ENCODE measurements at regions of chr20 and their contacts with region 1.

Region 1: DNA sequence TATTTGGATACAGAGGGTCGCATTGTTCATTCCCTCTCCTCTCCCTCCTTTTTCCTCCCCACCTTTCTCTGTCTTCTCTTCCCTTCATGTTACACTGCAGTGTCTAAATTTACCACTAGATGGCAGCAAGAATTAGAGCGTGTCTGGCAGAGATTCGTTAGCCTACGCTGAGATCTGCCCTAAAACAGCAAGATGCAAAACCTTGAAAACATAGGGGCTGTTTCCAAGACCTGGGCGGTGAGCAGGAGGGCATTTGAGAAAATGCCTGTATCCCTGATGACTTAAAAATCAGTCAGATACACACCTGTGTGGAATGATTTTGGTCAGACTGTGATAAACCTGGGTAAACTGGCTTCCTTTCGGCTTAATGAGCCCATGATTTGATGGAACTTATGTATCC is 101.5 kb upstream of the ISM1 start:
- DNase-seq: no peak
- H3K4me3 ChIP-seq: no peak overlapping the region
- H3K27ac ChIP-seq: no peak overlapping the region
- H3K4me1 ChIP-seq: no peaks in the 10 kb centered on the region
- H3K27me3 ChIP-seq: no peaks in the 10 kb centered on the region
- CTCF ChIP-seq: peak; percentile 76 to 88 (median 84)
- EP300 ChIP-seq: no peak
- POLR2A ChIP-seq: no peak

Region 2: GRCh38 chr20:13221673-13222318 is 102.2 kb after region 1 on chr20:
- intact Hi-C with region 1: loop called (anchors 5 kb)
- DNase-seq: peak; percentile 74
- H3K4me3 ChIP-seq: peak overlapping the region; percentile 12 to 62 (median 54)
- H3K27ac ChIP-seq: peak overlapping the region in 3 of 4 donors; percentile 1 to 52 (median 27)
- H3K4me1 ChIP-seq: peaks cover 0 to 22% (median 21%) of the 10 kb centered on the region in 4 donors
- H3K27me3 ChIP-seq: peaks cover 12 to 40% (median 29%) of the 10 kb centered on the region in 3 donors
- CTCF ChIP-seq: no peak
- EP300 ChIP-seq: no peak
- POLR2A ChIP-seq: no peak

Region 3: GRCh38 chr20:13546497-13547131 is 427.0 kb after region 1 on chr20:
- intact Hi-C with region 1: loop called (anchors 1 kb)
- DNase-seq: peak; percentile 89
- H3K4me3 ChIP-seq: no peak overlapping the region
- H3K27ac ChIP-seq: no peak overlapping the region
- H3K4me1 ChIP-seq: peaks cover 0 to 16% (median 12%) of the 10 kb centered on the region in 4 donors
- H3K27me3 ChIP-seq: no peaks in the 10 kb centered on the region
- CTCF ChIP-seq: peak; percentile 46 to 87 (median 80)
- EP300 ChIP-seq: no peak
- POLR2A ChIP-seq: no peak

Region 4: DNA sequence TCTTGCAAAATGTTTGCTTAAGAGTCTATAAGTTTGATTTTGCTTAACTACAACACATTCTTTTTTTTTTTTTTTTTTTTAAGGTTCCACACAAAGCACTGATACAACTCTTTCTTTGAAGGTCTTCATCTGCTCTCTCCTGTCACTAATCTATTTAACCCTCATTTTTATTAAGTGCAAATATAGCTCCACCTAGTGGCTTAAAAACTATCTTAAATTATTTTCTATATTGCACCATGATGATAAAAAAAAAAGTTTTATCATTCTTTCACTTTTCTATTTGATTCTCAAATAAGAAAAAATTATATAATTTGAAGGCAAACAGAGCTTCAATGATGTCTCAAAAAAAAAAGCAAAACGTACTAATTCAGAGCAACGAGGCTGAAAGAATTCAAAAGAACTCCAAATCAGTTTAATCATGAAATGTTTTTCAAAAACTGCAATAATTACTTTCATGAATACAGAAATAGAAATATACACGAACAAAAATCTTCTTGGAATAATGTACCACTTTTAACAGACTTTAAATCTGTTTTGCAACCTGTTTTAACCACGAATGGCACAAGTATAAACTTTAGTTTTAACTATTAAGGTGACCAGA is 652.4 kb after region 1 on chr20:
- intact Hi-C with region 1: loop called (anchors 1 kb)
- DNase-seq: no peak
- H3K4me3 ChIP-seq: no peak overlapping the region
- H3K27ac ChIP-seq: no peak overlapping the region
- H3K4me1 ChIP-seq: no peaks in the 10 kb centered on the region
- H3K27me3 ChIP-seq: no peaks in the 10 kb centered on the region
- CTCF ChIP-seq: peak in 3 of 4 experiments; percentile 22 to 39 (median 34)
- EP300 ChIP-seq: no peak
- POLR2A ChIP-seq: no peak

Region 5: DNA sequence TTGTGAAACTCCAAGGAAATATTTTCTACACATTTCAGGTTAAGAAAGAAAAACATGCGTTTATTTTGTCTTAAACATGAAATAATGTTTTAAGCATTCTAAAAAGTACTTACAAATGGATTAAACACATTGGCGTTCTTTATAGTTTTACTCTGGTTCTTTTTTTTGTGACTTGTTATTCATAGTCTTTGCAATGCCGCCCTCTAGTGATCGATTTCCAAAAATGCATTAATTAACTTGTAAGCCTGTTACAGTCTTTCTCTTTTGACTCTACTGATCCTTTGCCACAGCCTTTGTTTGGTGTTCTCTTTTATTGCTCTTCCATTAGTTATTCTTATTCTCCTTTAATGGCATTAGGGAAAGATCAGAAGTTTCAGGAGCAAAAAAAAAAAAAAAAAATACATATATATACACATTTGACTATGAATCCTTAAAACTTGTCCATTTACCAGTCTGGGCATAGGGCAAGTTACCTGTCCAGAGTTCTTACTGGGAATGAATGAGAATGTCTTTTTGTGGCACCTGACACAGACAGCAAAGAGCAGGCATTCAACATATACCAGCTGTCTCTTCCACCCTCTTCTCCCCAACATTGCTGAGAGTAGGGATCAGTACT is 935.7 kb after region 1 on chr20:
- intact Hi-C with region 1: loop called (anchors 10 kb)
- DNase-seq: no peak
- H3K4me3 ChIP-seq: no peak overlapping the region
- H3K27ac ChIP-seq: no peak overlapping the region
- H3K4me1 ChIP-seq: peaks cover 0 to 11% (median 5%) of the 10 kb centered on the region in 4 donors
- H3K27me3 ChIP-seq: no peaks in the 10 kb centered on the region
- CTCF ChIP-seq: peak; percentile 22 to 51 (median 45)
- EP300 ChIP-seq: no peak
- POLR2A ChIP-seq: no peak